AG04450 (cell line): ENCODE measurements at regions of chr12 and their contacts with region 1.

Region 1: DNA sequence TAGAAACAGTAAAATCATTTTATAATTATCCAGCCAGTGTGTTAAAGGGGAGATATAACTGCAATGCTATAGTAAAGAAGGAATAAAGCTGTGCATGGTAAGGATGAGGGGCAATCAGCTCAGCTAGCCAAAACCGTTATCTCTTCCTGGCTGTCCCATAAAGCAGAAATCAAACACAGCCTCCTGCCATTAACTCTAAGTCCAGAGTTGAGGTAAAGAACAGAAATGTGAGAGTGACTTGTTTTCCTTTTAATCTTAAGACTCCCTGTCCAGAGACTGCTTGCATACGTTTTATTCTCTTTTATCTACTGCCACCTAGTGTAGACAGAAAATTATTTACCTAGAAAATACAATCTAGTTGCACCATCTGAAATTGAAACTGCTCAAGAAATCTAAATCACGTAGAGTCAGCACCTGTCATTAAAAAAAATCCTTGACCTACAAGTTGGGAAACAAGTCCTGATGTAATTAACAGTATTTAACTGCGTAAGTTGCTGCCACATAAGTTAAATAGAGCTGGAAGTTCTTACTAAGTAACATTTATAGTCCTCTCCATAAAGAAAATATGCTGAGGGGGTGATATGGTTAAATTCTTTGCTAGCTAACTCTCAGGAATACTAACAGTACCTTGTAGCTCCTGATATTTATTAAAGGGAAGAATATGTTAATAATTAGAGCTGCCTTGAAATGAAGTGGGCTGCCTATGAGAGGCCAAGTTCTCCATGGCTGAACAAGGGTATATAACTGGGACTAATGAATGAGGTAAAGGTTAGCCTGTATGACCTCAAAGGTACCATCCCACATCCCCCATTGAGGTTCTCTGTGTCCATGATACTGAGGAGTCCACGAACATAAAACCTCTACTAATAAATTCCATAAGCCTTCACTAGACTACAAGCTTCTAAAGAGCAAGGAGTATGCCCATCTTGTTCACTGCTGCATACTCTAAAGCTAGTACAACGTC is 62.7 kb downstream of the GALNT4 start:
- DNase-seq: peak; percentile 58
- H3K4me3 ChIP-seq: no peak overlapping the region; the same call in 1 of the 2 replicates
- H3K27ac ChIP-seq: no peak overlapping the region
- H3K27me3 ChIP-seq: no peaks in the 10 kb centered on the region
- CTCF ChIP-seq: peak; percentile 49

Region 2: DNA sequence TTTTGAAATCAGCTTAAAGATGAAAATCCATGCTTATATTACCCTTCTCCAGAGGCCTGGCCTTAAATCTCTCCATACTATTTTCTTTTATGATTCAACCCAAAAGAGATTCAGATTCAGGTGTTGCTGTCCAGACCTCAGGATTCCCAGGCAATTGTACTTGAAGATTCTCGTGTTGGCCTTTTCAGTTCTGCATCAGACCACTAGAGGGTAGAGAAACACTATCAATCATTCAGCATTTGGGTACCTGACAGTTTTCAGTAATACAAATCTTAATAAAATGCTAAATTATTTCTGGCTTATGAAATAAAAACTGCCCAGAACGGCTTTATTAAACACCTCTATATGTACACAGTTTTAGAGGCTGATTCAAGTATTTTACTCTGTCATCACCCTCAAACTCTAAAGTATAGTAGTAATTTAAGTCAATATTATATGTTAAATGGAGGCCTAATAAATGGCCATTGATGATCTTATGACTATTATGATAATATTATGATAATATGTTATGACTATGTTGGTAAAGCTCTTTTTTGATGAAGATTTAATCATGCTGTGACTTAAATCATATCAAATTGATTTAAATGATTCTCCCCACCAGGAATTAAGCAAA is 410.8 kb before region 1 on chr12:
- CTCF ChIA-PET with region 1: interaction called, 15 read pairs
- POLR2A ChIA-PET with region 1: no interaction called
- DNase-seq: peak; percentile 34
- H3K4me3 ChIP-seq: no peak overlapping the region
- H3K27ac ChIP-seq: no peak overlapping the region
- H3K27me3 ChIP-seq: no peaks in the 10 kb centered on the region
- CTCF ChIP-seq: peak; percentile 88

Region 3: GRCh38 chr12:89451841-89452251 is 10.1 kb before region 1 on chr12:
- CTCF ChIA-PET with region 1: interaction called, 15 read pairs
- POLR2A ChIA-PET with region 1: no interaction called
- DNase-seq: peak; percentile 60
- H3K4me3 ChIP-seq: no peak overlapping the region; the same call in 1 of the 2 replicates
- H3K27ac ChIP-seq: peak overlapping the region; percentile 54
- H3K27me3 ChIP-seq: no peaks in the 10 kb centered on the region
- CTCF ChIP-seq: no peak

Region 4: DNA sequence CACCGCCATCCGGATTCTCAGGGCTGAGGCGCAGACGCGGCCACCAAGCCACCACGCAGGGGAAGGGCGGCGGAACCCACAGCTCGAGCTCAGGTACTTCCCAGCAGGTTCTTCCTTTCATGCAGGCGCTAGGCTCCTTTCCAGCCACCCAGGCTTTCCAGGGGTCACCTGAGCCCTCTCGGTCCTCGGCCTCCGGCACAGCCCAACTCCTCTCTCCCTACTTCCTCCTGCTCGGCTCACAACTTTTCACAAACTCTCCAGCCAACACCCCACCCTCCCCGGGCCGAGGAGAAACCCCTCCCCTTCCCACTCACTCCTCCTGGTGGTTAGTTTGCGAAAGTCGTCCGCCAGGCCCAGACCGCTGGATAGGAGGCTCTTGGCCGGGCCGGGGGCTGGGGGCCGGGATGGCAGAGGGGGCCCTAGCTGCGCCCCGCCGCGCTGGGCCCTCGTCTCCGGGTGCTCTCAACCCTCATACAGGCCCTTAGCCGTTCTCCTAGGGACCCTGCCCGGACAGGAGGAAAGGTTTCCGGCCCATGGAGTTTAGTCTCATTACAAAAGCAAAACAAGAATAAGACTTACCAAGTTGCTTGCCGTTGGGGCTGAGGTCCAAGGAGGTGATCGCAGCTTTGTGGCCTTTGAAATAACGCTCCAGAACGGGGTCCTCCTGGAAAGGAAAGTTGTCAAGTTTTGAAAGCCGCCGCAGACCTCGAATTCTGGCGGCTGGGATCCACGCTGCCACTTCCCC is 62.8 kb after region 1 on chr12 and contains the start of gene GALNT4:
- CTCF ChIA-PET with region 1: interaction called, 117 read pairs
- POLR2A ChIA-PET with region 1: no interaction called
- DNase-seq: peak; percentile 52
- H3K4me3 ChIP-seq: peak within 1 kb of the TSS; percentile 91
- H3K27ac ChIP-seq: peak within 1 kb of the TSS; percentile 76
- H3K27me3 ChIP-seq: no peaks in the 10 kb centered on the region
- CTCF ChIP-seq: peak; percentile 77
- polyA plus RNA-seq, gene GALNT4: 5.3 and 7.3 TPM in 2 replicates